PC-3 (cell line): ENCODE measurements at regions of chr14 and their contacts with region 1.

Region 1: GRCh38 chr14:44657696-44658388 is 150.8 kb upstream of the FSCB start:
- DNase-seq: peak; percentile 66
- ATAC-seq: peak; percentile 90
- H3K4me3 ChIP-seq: no peak overlapping the region
- H3K27ac ChIP-seq: no peak overlapping the region
- H3K4me1 ChIP-seq: no peaks in the 10 kb centered on the region
- H3K27me3 ChIP-seq: no peaks in the 10 kb centered on the region
- CTCF ChIP-seq: peak; percentile 81

Region 2: GRCh38 chr14:43503590-43503907 is 1154.3 kb before region 1 on chr14:
- CTCF ChIA-PET with region 1: no interaction called
- POLR2A ChIA-PET with region 1: no interaction called
- intact Hi-C with region 1: loop called (anchors 5 kb)
- DNase-seq: peak; percentile 45
- ATAC-seq: peak; percentile 92
- H3K4me3 ChIP-seq: no peak overlapping the region
- H3K27ac ChIP-seq: no peak overlapping the region
- H3K4me1 ChIP-seq: no peaks in the 10 kb centered on the region
- H3K27me3 ChIP-seq: no peaks in the 10 kb centered on the region
- CTCF ChIP-seq: peak; percentile 61

Region 3: DNA sequence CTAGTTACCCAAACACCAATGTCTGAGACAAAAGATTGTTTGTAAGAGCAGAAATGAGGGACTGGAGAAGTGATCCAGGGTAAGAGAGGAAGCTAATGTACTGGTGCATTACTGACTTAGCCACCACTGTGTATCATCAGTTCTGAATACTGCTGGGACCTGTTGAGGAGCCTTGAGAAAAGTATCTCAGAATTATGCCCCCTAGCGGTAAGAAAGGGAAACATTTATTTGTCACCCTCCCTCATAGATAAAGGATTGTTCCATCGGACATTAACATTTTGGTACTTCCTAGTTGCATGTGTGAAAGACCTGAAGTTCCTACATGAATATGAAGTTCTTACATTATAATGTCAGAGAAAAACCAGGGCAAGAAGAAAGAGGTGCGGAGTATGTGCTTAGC is 763.3 kb before region 1 on chr14:
- CTCF ChIA-PET with region 1: no interaction called
- POLR2A ChIA-PET with region 1: no interaction called
- intact Hi-C with region 1: loop called (anchors 2 kb)
- DNase-seq: peak; percentile 56
- ATAC-seq: peak; percentile 49; the same call in 1 of the 2 replicates
- H3K4me3 ChIP-seq: no peak overlapping the region
- H3K27ac ChIP-seq: no peak overlapping the region
- H3K4me1 ChIP-seq: 0 out of 2 replicates have a peak, but pooled peaks cover 4% of the 10 kb centered on the region
- H3K27me3 ChIP-seq: no peaks in the 10 kb centered on the region
- CTCF ChIP-seq: peak; percentile 83

Region 4: DNA sequence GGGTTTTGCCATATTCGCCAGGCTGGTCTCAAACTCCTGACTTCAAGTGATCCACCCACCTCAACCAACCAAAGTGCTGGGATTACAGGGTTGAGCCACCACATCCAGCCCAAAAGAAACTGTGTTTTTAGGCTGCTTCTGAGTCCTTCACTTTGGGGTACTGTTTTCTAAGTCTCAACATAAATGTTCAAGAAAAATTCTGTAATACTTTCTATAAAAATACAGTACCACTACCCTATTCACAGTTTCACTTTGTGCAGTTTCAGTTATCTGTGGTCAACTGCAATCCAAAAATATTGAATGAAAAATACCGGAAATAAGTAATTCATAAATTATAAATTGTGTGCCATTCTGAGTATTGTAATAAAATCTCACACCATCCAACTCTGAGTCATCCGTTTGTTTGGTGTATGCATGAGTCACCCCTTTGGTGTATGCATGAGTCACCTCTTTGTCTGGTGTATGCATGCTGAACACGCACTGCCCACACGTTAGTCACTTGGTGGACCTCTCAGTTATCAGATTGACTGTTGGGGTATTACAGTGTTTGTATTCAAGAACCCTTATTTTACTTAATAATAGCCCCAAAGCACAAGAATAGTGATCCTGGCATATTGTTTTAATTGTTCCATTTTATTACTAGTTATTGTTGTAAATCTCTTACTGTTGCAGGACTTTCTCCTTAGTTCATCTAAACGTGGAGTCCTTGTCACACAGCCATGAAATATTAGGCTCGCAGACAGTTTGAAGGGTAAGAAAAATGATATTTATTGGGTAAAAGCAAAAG is 341.0 kb before region 1 on chr14:
- CTCF ChIA-PET with region 1: no interaction called
- POLR2A ChIA-PET with region 1: no interaction called
- intact Hi-C with region 1: loop called (anchors 1 kb)
- DNase-seq: peak; percentile 98
- ATAC-seq: peak; percentile 100
- H3K4me3 ChIP-seq: no peak overlapping the region; the same call in 1 of the 2 replicates
- H3K27ac ChIP-seq: peak overlapping the region; percentile 91
- H3K4me1 ChIP-seq: peaks cover 5% of the 10 kb centered on the region
- H3K27me3 ChIP-seq: no peaks in the 10 kb centered on the region
- CTCF ChIP-seq: no peak

Region 5: DNA sequence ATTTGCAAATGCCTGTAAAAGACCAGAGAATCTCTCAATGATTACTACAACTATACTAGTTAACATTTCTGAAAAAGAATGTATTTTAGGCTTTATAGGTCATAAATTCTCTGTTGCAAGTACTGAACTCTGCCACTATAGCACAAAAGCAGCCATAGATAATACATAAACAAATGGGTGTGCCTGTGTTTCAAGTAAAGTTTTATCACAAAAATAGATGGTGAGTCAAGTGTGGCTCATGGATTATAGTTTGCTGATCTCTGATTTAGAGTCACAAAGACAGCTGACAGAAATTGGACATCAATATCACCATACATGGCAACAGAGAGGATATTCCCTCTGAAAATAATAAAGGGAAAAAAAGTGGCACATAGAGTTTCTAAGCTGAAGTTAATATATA is 218.9 kb before region 1 on chr14:
- CTCF ChIA-PET with region 1: no interaction called
- POLR2A ChIA-PET with region 1: no interaction called
- intact Hi-C with region 1: loop called (anchors 10 kb)
- DNase-seq: peak; percentile 66
- ATAC-seq: peak; percentile 95
- H3K4me3 ChIP-seq: no peak overlapping the region
- H3K27ac ChIP-seq: 0 out of 2 replicates have a peak overlapping the region, but pooled peaks have one; percentile 38
- H3K4me1 ChIP-seq: peaks cover 8% of the 10 kb centered on the region
- H3K27me3 ChIP-seq: no peaks in the 10 kb centered on the region
- CTCF ChIP-seq: no peak

Region 6: DNA sequence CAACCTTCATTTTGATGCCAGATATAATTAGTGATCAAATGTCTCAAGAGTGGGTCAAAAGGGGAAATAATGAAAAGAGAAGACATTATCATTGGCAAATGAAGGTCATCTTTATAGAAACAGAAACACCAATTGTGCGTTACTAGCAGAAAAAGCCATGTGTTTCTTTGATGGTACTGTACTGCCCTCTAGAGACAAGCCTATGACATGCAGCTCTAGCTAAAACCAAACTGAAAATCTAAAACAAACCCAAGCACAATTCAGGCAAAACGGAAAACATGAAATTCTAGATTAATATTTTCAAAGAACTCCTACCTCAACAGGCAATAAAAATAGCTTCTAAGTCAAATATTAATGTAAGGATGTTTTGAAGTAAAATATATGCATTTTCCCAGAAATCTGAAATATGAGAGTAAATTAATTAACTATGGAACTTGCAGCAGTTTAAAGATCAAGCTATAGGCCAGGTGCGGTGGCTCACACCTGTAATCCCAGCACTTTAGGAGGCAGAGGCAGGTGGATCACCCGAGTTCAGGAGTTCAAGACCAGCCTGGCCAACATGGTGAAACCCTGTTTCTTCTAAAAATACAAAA is 188.5 kb after region 1 on chr14:
- CTCF ChIA-PET with region 1: no interaction called
- POLR2A ChIA-PET with region 1: no interaction called
- intact Hi-C with region 1: loop called (anchors 2 kb)
- DNase-seq: peak; percentile 75
- ATAC-seq: peak; percentile 68
- H3K4me3 ChIP-seq: peak overlapping the region; percentile 6; the same call in 1 of the 2 replicates
- H3K27ac ChIP-seq: no peak overlapping the region
- H3K4me1 ChIP-seq: no peaks in the 10 kb centered on the region
- H3K27me3 ChIP-seq: 0 out of 2 replicates have a peak, but pooled peaks cover 4% of the 10 kb centered on the region
- CTCF ChIP-seq: peak; percentile 96